Activated B cell treated with CpG ODN at 0.5 μM for 24 hours (primary cell): ENCODE measurements at regions of chr1 and their contacts with region 1.

Region 1: DNA sequence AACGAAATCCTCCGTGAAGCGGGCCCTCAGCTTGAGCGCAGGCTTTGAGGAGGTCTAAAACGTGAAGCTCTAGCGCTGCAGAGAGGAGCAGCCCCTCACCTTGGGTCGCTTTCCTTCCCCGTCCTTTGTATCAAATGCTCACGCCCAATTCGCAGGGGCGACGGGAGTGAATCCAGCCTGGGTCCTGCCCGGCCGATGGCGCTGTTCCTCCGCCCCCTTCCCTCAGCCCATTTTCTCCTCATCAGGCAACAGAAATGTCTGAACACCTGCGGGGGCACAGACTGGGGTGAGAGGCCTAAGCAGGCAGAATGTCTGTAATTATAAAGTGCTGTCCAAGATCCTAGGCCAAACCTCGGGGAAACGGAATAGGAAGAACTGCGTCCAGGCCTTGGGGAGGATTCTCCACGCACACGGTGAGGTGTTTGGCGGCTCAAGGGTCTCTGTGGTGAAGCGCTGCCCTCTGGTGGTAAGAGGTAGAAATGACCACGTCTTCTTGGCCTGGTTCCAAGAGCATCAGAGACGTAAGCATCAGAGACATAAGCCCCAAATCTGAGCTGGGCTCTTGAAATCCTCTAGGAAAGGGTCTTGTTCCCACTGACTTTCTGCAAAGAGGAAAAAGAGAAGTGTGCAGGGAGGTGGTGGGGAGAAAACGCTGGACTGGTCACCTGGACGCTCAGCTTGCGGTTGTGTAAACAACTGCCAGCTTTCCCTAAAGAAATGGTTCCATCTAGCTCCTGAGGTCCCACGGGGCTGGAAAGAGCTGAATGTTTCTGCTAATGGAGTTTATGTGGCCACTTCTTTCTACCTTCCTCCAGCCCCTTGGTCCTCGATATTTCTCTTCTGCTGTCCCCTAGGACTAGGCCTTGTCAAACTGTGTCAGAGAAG is 92.1 kb upstream of the CD53 start:
- DNase-seq: peak; percentile 48
- ATAC-seq: peak; percentile 85
- H3K4me3 Mint-ChIP-seq: peak overlapping the region; percentile 47
- H3K27ac Mint-ChIP-seq: no peak overlapping the region
- H3K4me1 Mint-ChIP-seq: peaks cover 43% of the 10 kb centered on the region
- H3K27me3 Mint-ChIP-seq: no peaks in the 10 kb centered on the region
- CTCF ChIP-seq: no peak

Region 2: GRCh38 chr1:110384581-110385321 is 396.1 kb before region 1 on chr1:
- CTCF ChIA-PET with region 1: no interaction called
- POLR2A ChIA-PET with region 1: no interaction called
- intact Hi-C with region 1: loop called (anchors 10 kb)
- DNase-seq: peak; percentile 59
- ATAC-seq: peak; percentile 77
- H3K4me3 Mint-ChIP-seq: peak overlapping the region; percentile 55
- H3K27ac Mint-ChIP-seq: peak overlapping the region; percentile 95
- H3K4me1 Mint-ChIP-seq: peaks cover 95% of the 10 kb centered on the region
- H3K27me3 Mint-ChIP-seq: no peaks in the 10 kb centered on the region
- CTCF ChIP-seq: no peak

Region 3: GRCh38 chr1:110554871-110555801 is 225.7 kb before region 1 on chr1:
- CTCF ChIA-PET with region 1: interaction called, 41 read pairs
- POLR2A ChIA-PET with region 1: no interaction called
- intact Hi-C with region 1: loop called (anchors 1 kb)
- DNase-seq: peak; percentile 50
- ATAC-seq: peak; percentile 96
- H3K4me3 Mint-ChIP-seq: peak overlapping the region; percentile 16
- H3K27ac Mint-ChIP-seq: no peak overlapping the region
- H3K4me1 Mint-ChIP-seq: peaks cover 3% of the 10 kb centered on the region
- H3K27me3 Mint-ChIP-seq: peaks cover 46% of the 10 kb centered on the region
- CTCF ChIP-seq: peak; percentile 33

Region 4: DNA sequence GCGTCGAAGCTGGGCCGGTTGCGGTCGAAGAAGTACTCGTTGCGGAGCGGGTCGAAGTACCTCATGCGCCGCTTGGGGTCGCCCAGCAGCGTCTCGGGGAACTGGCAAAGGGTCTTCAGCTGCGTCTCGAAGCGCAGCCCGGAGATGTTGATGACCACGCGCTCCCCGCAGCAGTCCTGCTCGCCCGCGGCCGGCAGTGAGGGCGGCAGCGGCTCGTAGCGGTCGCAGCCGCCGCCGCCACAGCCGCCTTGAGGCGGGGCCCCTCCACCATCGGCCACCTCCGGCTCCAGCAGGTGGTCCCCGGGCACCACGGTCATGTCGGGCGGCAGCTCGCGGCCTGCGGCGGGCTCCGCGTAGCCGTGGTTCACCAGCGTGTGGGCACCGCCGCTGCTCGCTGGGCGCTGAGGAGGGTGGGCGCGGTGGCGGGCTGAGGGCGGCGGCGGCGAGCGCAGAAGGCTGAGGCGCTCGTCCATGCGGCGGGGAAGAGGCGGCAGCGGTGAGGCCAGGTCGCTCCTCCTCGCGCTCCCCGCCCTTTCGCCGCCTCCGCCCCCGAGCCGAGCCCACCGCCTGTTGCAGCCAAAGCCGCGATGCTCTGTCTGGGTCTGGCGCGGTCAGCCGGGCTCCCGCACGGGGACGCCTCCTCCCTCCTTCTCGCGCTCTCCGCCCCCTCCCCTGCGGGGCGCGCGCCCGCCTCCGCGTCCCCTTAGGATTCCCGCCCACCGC is 106.3 kb before region 1 on chr1 and contains the start of gene KCNA3:
- CTCF ChIA-PET with region 1: interaction called, 3 read pairs
- POLR2A ChIA-PET with region 1: no interaction called
- intact Hi-C with region 1: loop called (anchors 5 kb)
- DNase-seq: peak; percentile 68
- ATAC-seq: peak; percentile 62
- H3K4me3 Mint-ChIP-seq: peak within 1 kb of the TSS; percentile 90
- H3K27ac Mint-ChIP-seq: peak within 1 kb of the TSS; percentile 80
- H3K4me1 Mint-ChIP-seq: peaks cover 60% of the 10 kb centered on the region
- H3K27me3 Mint-ChIP-seq: no peaks in the 10 kb centered on the region
- CTCF ChIP-seq: no peak
- total RNA-seq, gene KCNA3: 15.0 and 20.0 TPM in 2 replicates

Region 5: GRCh38 chr1:110829955-110830553 is 49.2 kb after region 1 on chr1:
- CTCF ChIA-PET with region 1: interaction called, 40 read pairs
- POLR2A ChIA-PET with region 1: no interaction called
- intact Hi-C with region 1: loop called (anchors 1 kb)
- DNase-seq: no peak
- ATAC-seq: peak; percentile 92
- H3K4me3 Mint-ChIP-seq: no peak overlapping the region
- H3K27ac Mint-ChIP-seq: no peak overlapping the region
- H3K4me1 Mint-ChIP-seq: peaks cover 34% of the 10 kb centered on the region
- H3K27me3 Mint-ChIP-seq: no peaks in the 10 kb centered on the region
- CTCF ChIP-seq: peak; percentile 97

Region 6: GRCh38 chr1:111334169-111334568 is 553.3 kb after region 1 on chr1:
- CTCF ChIA-PET with region 1: interaction called, 4 read pairs
- POLR2A ChIA-PET with region 1: no interaction called
- intact Hi-C with region 1: loop called (anchors 5 kb)
- DNase-seq: no peak
- ATAC-seq: peak; percentile 61
- H3K4me3 Mint-ChIP-seq: no peak overlapping the region
- H3K27ac Mint-ChIP-seq: no peak overlapping the region
- H3K4me1 Mint-ChIP-seq: peaks cover 2% of the 10 kb centered on the region
- H3K27me3 Mint-ChIP-seq: no peaks in the 10 kb centered on the region
- CTCF ChIP-seq: no peak